ENCODE measurements at regions of chr21 and their contacts with region 1.

Region 1: GRCh38 chr21:41283211-41283818 is 33.3 kb upstream of the FAM3B start:
- DNase-seq: peak; percentile 52
- ATAC-seq: peak; percentile 95
- H3K4me3 Mint-ChIP-seq: no peak overlapping the region
- H3K27ac Mint-ChIP-seq: no peak overlapping the region
- H3K4me1 Mint-ChIP-seq: no peaks in the 10 kb centered on the region
- H3K27me3 Mint-ChIP-seq: peaks cover 16% of the 10 kb centered on the region

Region 2: GRCh38 chr21:41374867-41375533 is 91.7 kb after region 1 on chr21:
- CTCF ChIA-PET with region 1: interaction called, 15 read pairs
- POLR2A ChIA-PET with region 1: no interaction called
- intact Hi-C with region 1: loop called (anchors 2 to 5 kb)
- DNase-seq: peak; percentile 78
- ATAC-seq: peak; percentile 88
- H3K4me3 Mint-ChIP-seq: no peak overlapping the region
- H3K27ac Mint-ChIP-seq: peak overlapping the region; percentile 86
- H3K4me1 Mint-ChIP-seq: peaks cover 44% of the 10 kb centered on the region
- H3K27me3 Mint-ChIP-seq: no peaks in the 10 kb centered on the region

Region 3: GRCh38 chr21:41437729-41438128 is 154.4 kb after region 1 on chr21:
- CTCF ChIA-PET with region 1: interaction called, 10 read pairs
- POLR2A ChIA-PET with region 1: no interaction called
- intact Hi-C with region 1: no loop called
- DNase-seq: no peak
- ATAC-seq: peak; percentile 71
- H3K4me3 Mint-ChIP-seq: no peak overlapping the region
- H3K27ac Mint-ChIP-seq: peak overlapping the region; percentile 65
- H3K4me1 Mint-ChIP-seq: peaks cover 11% of the 10 kb centered on the region
- H3K27me3 Mint-ChIP-seq: no peaks in the 10 kb centered on the region

Region 4: DNA sequence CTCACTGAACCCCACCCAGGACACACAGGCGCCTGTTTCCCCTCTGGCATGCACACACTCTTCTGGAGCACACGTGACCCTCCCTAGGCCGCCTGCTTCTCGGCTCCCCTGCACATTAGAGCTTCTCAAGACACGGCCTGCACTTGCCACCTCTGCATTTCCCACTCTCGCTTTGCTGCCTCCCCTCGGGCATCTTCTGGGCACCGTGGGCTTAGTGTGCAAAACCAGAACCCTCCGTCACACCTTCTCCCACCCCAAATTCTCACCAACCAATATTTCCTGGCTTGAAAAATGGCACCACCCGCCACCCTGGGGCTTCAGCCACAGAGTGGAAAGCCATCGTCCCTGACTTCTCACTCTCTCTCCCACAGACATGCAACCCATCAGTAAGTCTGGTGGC is 185.6 kb after region 1 on chr21:
- CTCF ChIA-PET with region 1: interaction called, 10 read pairs
- POLR2A ChIA-PET with region 1: no interaction called
- intact Hi-C with region 1: no loop called
- DNase-seq: no peak
- ATAC-seq: no peak
- H3K4me3 Mint-ChIP-seq: no peak overlapping the region
- H3K27ac Mint-ChIP-seq: no peak overlapping the region
- H3K4me1 Mint-ChIP-seq: no peaks in the 10 kb centered on the region
- H3K27me3 Mint-ChIP-seq: peaks cover 15% of the 10 kb centered on the region

Region 5: DNA sequence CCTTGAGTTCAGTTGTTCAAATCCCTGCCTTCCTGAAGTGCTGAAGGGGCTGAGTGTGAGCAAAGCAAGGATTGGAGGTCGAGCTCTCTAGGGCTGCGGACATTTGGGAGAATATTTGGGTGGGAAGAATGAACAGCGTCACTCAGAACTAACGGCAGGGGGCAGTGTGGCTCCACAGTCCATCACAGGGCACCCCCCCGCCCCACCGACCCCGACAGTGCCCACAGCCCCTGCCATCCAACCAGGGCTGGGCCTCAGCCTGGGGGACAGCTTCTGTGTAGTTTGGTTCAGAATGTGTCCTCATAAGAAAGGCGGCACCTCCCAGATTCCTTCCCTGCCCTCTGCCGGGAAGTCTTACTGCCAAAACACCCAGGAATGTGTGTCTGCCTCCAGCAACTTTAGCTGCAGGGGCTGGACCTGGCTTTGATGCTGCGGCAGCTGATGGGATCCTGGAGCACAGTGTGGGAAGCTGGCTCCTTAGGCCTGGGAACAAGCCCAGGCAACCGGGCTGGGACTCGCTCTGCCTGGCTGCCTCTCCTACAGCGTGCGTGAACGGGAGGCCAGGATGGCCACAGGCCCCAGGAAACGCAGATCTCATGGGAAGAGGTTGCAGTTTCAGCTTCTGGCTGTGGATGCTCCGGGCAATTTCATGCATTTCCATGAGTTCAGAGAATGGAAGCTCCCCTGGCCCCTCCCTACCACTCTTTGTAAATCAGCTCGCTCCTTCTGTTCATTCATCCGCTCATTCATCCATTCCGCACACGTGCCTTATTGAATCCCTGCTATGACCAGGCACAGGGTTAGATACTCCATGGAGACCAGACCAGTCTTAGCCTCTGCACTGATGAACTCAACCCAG is 329.6 kb after region 1 on chr21:
- CTCF ChIA-PET with region 1: interaction called, 4 read pairs
- POLR2A ChIA-PET with region 1: no interaction called
- intact Hi-C with region 1: loop called in 1 of 2 experiments (anchors 5 kb)
- DNase-seq: peak; percentile 60
- ATAC-seq: peak; percentile 74
- H3K4me3 Mint-ChIP-seq: no peak overlapping the region
- H3K27ac Mint-ChIP-seq: no peak overlapping the region
- H3K4me1 Mint-ChIP-seq: no peaks in the 10 kb centered on the region
- H3K27me3 Mint-ChIP-seq: peaks cover 11% of the 10 kb centered on the region

Region 6: DNA sequence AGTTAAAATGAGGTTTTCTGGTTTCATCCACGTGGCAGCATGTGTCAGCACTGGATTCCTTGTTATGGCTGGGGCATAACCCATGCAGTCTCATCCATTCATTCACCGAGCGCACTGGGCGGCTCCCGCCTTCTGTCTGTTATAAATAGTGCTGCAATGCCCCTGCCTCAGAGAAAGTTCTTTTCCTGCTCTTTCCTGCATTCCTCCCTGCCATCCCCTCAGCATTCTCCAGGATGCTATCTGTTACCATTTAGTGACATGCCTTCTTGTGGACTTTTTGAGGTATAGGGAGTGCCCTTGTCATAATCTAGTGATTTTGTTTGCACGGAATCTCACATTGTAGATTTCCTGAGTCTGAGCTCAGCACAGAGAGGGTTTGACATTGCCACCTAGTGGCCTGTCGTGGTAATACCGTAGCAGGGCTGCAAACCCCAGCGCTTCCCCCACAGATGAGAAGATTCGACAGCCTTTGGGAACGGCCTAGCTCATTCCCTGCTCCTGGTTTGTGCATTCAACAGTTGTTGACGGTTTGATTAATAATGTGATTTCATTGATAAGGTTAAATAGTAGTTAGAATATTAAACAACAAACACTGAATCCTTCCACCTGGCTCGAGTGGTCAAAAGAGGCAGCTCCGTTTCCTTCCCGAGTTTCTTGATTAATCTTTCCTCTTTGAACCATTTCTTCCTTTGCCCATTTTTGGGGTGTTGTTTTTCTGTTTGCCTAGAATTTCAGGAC is 834.1 kb after region 1 on chr21:
- CTCF ChIA-PET with region 1: interaction called, 8 read pairs
- POLR2A ChIA-PET with region 1: no interaction called
- intact Hi-C with region 1: loop called in 1 of 2 experiments (anchors 5 kb)
- DNase-seq: peak; percentile 86
- ATAC-seq: peak; percentile 88
- H3K4me3 Mint-ChIP-seq: no peak overlapping the region
- H3K27ac Mint-ChIP-seq: no peak overlapping the region
- H3K4me1 Mint-ChIP-seq: peaks cover 10% of the 10 kb centered on the region
- H3K27me3 Mint-ChIP-seq: peaks cover 43% of the 10 kb centered on the region

Measured in activated CD4-positive, alpha-beta T cell treated with anti-CD3 and anti-CD28 coated beads for 36 hours (primary cell).